CD14-positive monocyte (primary cell): ENCODE measurements at regions of chr11 and their contacts with region 1.

Region 1: DNA sequence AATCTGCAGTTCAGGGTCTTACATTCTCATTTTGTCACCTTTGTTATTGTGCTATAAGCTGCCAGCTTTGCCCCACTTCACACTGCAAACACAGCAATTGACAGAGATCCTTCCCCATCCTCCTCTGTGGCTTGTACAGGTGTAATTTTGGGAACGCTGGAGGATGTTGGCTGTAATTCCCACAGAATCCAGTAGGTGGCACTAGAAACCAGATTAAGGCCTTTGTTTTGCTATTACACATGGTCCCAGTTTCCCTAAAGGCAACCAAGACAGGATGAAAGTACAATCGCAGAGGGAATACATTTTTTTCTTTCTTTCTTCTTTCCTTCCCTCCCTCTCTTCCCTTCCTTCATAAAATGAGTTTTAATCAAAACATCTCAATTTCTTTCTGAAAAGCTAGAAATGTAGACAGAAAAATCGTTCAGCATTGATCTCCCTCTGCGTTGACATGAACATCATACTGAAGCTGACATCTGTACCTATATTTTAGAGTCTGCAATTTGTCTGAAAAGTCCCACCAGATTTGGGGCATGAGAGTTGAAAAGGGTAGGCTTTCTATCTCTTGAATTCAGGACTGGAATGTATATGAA is 21.3 kb upstream of the NELL1 start:
- DNase-seq: peak; percentile 3 to 27 (median 18)
- H3K4me3 ChIP-seq: no peak overlapping the region
- H3K4me3 Mint-ChIP-seq: no peak overlapping the region
- H3K27ac ChIP-seq: no peak overlapping the region
- H3K27ac Mint-ChIP-seq: no peak overlapping the region
- H3K4me1 ChIP-seq: no peaks in the 10 kb centered on the region
- H3K4me1 Mint-ChIP-seq: no peaks in the 10 kb centered on the region
- H3K27me3 ChIP-seq: peaks cover 0 to 3% of the 10 kb centered on the region in 2 donors
- H3K27me3 Mint-ChIP-seq: peaks cover 2 to 7% (median 7%) of the 10 kb centered on the region in 3 donors
- CTCF ChIP-seq: peak; percentile 96

Region 2: GRCh38 chr11:20723366-20723765 is 75.3 kb after region 1 on chr11:
- intact Hi-C with region 1: no loop called
- DNase-seq: no peak
- H3K4me3 ChIP-seq: no peak overlapping the region
- H3K4me3 Mint-ChIP-seq: no peak overlapping the region
- H3K27ac ChIP-seq: no peak overlapping the region
- H3K27ac Mint-ChIP-seq: no peak overlapping the region
- H3K4me1 ChIP-seq: no peaks in the 10 kb centered on the region
- H3K4me1 Mint-ChIP-seq: no peaks in the 10 kb centered on the region
- H3K27me3 ChIP-seq: no peaks in the 10 kb centered on the region
- H3K27me3 Mint-ChIP-seq: no peaks in the 10 kb centered on the region
- CTCF ChIP-seq: no peak

Region 3: GRCh38 chr11:21511835-21512440 is 863.9 kb after region 1 on chr11:
- intact Hi-C with region 1: loop called (anchors 5 to 10 kb)
- DNase-seq: peak; percentile 28 to 60 (median 29)
- H3K4me3 ChIP-seq: no peak overlapping the region
- H3K4me3 Mint-ChIP-seq: no peak overlapping the region
- H3K27ac ChIP-seq: no peak overlapping the region
- H3K27ac Mint-ChIP-seq: no peak overlapping the region
- H3K4me1 ChIP-seq: no peaks in the 10 kb centered on the region
- H3K4me1 Mint-ChIP-seq: peaks cover 3% of the 10 kb centered on the region
- H3K27me3 ChIP-seq: no peaks in the 10 kb centered on the region
- H3K27me3 Mint-ChIP-seq: no peaks in the 10 kb centered on the region
- CTCF ChIP-seq: peak; percentile 74

Region 4: DNA sequence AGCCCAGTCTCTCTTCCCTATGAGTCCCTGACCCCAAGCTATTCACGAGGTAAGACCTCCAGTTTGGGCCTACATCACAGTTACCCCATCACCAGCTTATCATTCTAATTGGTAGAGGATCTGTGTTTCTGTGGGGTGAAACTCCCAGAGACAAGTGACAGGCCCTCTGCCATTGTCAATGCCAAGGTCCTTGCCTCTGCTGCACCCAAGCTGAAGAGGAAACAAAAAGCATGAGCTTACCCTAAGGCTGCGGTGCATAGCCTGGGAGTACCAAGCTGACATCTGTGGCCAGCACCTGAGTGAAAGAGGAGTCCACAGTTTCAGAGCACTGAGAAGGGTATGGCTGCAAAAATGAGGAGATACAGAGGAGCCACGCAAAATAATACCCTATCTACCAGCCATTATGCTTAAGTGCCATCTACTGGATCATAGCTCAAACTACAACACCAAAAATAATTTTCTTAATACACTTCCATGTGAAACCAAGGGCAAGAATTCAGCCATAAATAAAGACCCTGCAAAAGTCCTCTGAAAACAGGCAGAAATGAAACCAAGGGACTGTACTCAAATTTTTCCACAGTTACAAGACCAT is 1482.5 kb after region 1 on chr11:
- intact Hi-C with region 1: loop called in 1 of 2 experiments (anchors 5 kb)
- DNase-seq: no peak
- H3K4me3 ChIP-seq: no peak overlapping the region
- H3K4me3 Mint-ChIP-seq: no peak overlapping the region
- H3K27ac ChIP-seq: no peak overlapping the region
- H3K27ac Mint-ChIP-seq: no peak overlapping the region
- H3K4me1 ChIP-seq: no peaks in the 10 kb centered on the region
- H3K4me1 Mint-ChIP-seq: no peaks in the 10 kb centered on the region
- H3K27me3 ChIP-seq: peaks cover 0 to 2% of the 10 kb centered on the region in 2 donors
- H3K27me3 Mint-ChIP-seq: peaks cover 2 to 7% (median 5%) of the 10 kb centered on the region in 3 donors
- CTCF ChIP-seq: peak; percentile 62